ENCODE measurements at regions of chr20 and their contacts with region 1.

Region 1: GRCh38 chr20:9172851-9173250 is 104.0 kb downstream of the PLCB4 start:
- DNase-seq: no peak
- ATAC-seq: no peak
- H3K4me3 ChIP-seq: no peak overlapping the region
- H3K27ac ChIP-seq: no peak overlapping the region
- H3K4me1 ChIP-seq: no peaks in the 10 kb centered on the region
- H3K27me3 ChIP-seq: no peaks in the 10 kb centered on the region
- CTCF ChIP-seq: peak; percentile 12 to 38 (median 20); a peak in 3 of 6 replicates
- POLR2A ChIP-seq: no peak
- RAD21 ChIP-seq: peak; percentile 58

Region 2: GRCh38 chr20:8424010-8424409 is 748.8 kb before region 1 on chr20:
- CTCF ChIA-PET with region 1: no interaction called
- POLR2A ChIA-PET with region 1: no interaction called
- RAD21 ChIA-PET with region 1: no interaction called
- intact Hi-C with region 1: no loop called
- DNase-seq: no peak
- ATAC-seq: no peak; the same call in 1 of the 2 replicates
- H3K4me3 ChIP-seq: no peak overlapping the region
- H3K27ac ChIP-seq: no peak overlapping the region
- H3K4me1 ChIP-seq: no peaks in the 10 kb centered on the region
- H3K27me3 ChIP-seq: no peaks in the 10 kb centered on the region
- CTCF ChIP-seq: no peak
- POLR2A ChIP-seq: no peak
- RAD21 ChIP-seq: no peak

Region 3: GRCh38 chr20:8853805-8854338 is 319.0 kb before region 1 on chr20:
- CTCF ChIA-PET with region 1: interaction called, 6 read pairs
- POLR2A ChIA-PET with region 1: no interaction called
- RAD21 ChIA-PET with region 1: no interaction called
- intact Hi-C with region 1: loop called (anchors 2 kb)
- DNase-seq: peak; percentile 40
- ATAC-seq: peak; percentile 92
- H3K4me3 ChIP-seq: no peak overlapping the region
- H3K27ac ChIP-seq: no peak overlapping the region
- H3K4me1 ChIP-seq: no peaks in the 10 kb centered on the region
- H3K27me3 ChIP-seq: no peaks in the 10 kb centered on the region
- CTCF ChIP-seq: peak; percentile 69 to 88 (median 80)
- POLR2A ChIP-seq: no peak
- RAD21 ChIP-seq: peak; percentile 80

Region 4: DNA sequence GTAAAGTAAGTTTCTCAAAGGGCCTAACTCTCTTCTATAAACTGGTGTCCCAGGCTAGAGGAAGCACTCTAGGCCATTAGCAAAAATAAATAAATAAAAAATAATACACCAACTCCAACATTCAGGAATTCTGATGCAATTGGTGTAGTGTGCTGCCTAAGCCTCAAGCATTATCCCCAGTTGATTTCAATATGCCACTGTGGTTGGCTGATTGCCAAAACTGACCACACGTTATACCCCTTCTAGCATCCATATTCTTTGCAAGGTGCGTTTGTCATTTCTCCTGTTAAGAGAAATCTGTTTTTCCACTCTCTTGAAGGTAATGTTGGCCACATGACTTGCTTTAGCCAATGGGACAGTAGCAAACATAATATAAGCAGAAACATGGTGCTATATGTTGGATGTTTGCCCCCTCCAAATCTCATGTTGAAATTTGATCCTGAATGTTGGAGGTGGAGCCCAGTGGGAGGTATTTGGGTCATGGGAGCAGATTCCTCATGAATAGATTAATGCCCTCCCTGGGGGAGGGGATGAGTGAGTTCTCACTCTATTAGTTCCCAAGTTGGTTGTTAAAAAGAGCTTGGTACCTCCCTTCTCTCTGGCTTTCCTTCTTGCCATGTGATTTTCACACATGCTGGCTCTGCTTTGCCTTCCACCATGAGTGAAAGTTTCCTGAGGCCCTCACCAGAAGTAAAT is 175.9 kb before region 1 on chr20:
- CTCF ChIA-PET with region 1: no interaction called
- POLR2A ChIA-PET with region 1: no interaction called
- RAD21 ChIA-PET with region 1: no interaction called
- intact Hi-C with region 1: no loop called
- DNase-seq: no peak
- ATAC-seq: no peak
- H3K4me3 ChIP-seq: no peak overlapping the region
- H3K27ac ChIP-seq: no peak overlapping the region
- H3K4me1 ChIP-seq: no peaks in the 10 kb centered on the region
- H3K27me3 ChIP-seq: no peaks in the 10 kb centered on the region
- CTCF ChIP-seq: no peak
- POLR2A ChIP-seq: no peak
- RAD21 ChIP-seq: no peak

Region 5: DNA sequence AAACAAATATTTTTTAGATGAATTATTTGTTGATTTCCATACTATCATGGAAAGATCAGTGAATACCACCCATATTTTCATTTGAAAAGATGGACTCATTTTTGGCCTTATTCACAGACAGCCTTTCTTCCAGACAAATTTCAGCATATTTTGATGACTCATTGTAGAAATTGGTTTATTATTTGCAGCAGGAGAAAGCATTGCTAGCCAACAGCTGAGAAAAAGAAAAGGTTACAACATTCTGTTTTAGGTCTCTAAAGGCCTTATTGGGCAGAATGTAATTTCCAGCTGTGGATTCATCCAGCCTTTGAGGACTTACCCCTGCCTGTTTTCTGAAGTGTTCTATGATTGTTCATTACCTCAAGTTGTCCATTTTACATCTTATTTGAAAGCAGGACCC is 98.0 kb after region 1 on chr20:
- CTCF ChIA-PET with region 1: no interaction called
- POLR2A ChIA-PET with region 1: no interaction called
- RAD21 ChIA-PET with region 1: no interaction called
- intact Hi-C with region 1: no loop called
- DNase-seq: no peak
- ATAC-seq: no peak
- H3K4me3 ChIP-seq: no peak overlapping the region
- H3K27ac ChIP-seq: no peak overlapping the region
- H3K4me1 ChIP-seq: no peaks in the 10 kb centered on the region
- H3K27me3 ChIP-seq: no peaks in the 10 kb centered on the region
- CTCF ChIP-seq: no peak
- POLR2A ChIP-seq: no peak
- RAD21 ChIP-seq: no peak

Region 6: DNA sequence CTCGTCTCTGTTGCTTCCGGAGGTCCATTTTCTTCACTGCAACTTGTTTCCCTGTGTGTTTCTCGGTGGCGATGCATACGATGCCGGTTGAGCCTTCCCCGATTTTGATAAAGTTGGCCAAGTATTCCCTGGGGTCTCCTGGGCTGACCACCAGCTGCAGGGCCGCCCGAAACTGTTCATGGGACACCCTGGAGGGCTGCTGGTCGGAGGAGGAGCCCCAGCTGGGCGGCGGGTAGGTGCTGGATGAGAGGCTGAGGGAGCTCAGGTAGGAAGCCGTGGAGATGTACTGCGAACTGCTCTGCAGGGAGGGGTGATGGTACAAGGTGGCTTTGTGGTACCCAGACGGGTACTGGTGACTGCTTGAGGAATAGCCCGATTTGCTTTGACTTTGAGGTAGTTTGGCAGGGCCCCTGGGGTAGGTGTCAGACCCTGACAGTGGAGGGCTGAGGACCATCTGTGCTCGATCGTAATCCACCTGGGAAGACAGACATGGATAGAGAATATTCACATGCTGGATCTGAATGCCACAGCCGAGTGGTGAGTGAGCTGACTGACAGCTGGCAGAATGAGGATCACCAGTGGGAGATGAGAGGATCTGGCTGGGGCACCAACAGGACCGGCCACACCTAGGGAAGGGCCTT is 393.2 kb after region 1 on chr20:
- CTCF ChIA-PET with region 1: no interaction called
- POLR2A ChIA-PET with region 1: no interaction called
- RAD21 ChIA-PET with region 1: no interaction called
- intact Hi-C with region 1: no loop called
- DNase-seq: no peak
- ATAC-seq: no peak
- H3K4me3 ChIP-seq: no peak overlapping the region
- H3K27ac ChIP-seq: no peak overlapping the region
- H3K4me1 ChIP-seq: no peaks in the 10 kb centered on the region
- H3K27me3 ChIP-seq: peaks cover 16% of the 10 kb centered on the region; the same call in 1 of the 2 replicates
- CTCF ChIP-seq: no peak
- POLR2A ChIP-seq: no peak
- RAD21 ChIP-seq: no peak

Measured in HCT116 (cell line).